Sigmoid colon (tissue), 7 donors: ENCODE measurements at regions of chr1 and their contacts with region 1.

Region 1: GRCh38 chr1:160284782-160285344 is at the start of gene PEX19:
- DNase-seq: peak; percentile 97
- H3K4me3 ChIP-seq: peak within 1 kb of the TSS; percentile 75 to 93 (median 81)
- H3K27ac ChIP-seq: peak within 1 kb of the TSS; percentile 82 to 91 (median 86)
- H3K4me1 ChIP-seq: peaks cover 0 to 23% (median 20%) of the 10 kb centered on the region in 4 donors
- H3K27me3 ChIP-seq: no peaks in the 10 kb centered on the region
- CTCF ChIP-seq: no peak
- EP300 ChIP-seq: no peak
- POLR2A ChIP-seq: peak; percentile 70 to 76
- total RNA-seq, gene PEX19: 49.0 to 57.4 (median 53.0) TPM

Region 2: GRCh38 chr1:160251687-160252526 is 33.0 kb before region 1 on chr1:
- intact Hi-C with region 1: loop called (anchors 2 kb)
- DNase-seq: peak; percentile 88
- H3K4me3 ChIP-seq: no peak overlapping the region
- H3K27ac ChIP-seq: peak overlapping the region; percentile 33 to 61 (median 47)
- H3K4me1 ChIP-seq: peaks cover 0 to 44% (median 34%) of the 10 kb centered on the region in 4 donors
- H3K27me3 ChIP-seq: no peaks in the 10 kb centered on the region
- CTCF ChIP-seq: peak; percentile 57 to 70 (median 62)
- EP300 ChIP-seq: no peak
- POLR2A ChIP-seq: no peak